ENCODE measurements at regions of chr19 and their contacts with region 1.

Region 1: DNA sequence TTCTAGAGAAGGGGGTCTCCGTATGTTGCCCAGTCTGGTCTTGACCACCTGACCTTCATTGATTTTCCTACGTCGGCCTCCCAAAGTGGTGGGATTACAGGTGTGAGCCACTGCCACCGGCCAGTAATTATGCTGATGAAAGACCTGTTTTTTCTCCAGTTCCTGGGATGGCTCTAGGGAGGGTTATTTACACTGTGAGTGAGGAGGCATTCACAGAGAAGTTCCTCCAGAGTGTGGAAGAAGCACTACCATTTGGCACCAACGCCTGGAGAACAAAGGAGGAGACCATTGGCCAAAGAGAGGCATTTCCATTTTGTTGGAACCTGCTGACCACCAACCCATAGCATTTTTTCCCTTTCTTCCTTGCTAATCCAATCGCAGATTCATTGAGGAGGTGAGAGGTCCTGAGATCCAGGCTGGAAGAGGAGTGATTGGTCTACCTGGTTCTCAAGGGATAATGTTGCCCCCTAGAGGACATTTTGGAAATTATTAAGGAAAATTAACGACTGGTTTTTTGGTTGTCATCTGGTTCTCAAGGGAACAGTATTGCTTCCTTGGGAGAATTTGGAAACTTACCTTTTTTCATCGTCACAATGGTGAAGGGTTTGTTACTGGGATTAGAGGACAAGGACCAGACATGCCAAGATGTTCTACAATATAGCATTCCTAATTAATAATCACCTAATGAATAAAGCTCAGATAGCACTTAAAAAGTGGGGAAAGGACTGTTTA is 5.5 kb upstream of the SAE1 start:
- DNase-seq: no peak
- H3K4me3 ChIP-seq: no peak overlapping the region
- CTCF ChIP-seq: peak in 1 of 3 donors; percentile 41
- POLR2A ChIP-seq: no peak

Region 2: GRCh38 chr19:46697204-46697960 is 427.7 kb before region 1 on chr19:
- intact Hi-C with region 1: no loop called
- DNase-seq: peak; percentile 87 to 98
- H3K4me3 ChIP-seq: no peak overlapping the region
- CTCF ChIP-seq: no peak
- POLR2A ChIP-seq: no peak

Region 3: GRCh38 chr19:46898731-46899130 is 226.4 kb before region 1 on chr19:
- intact Hi-C with region 1: no loop called
- DNase-seq: peak in 1 of 2 donors; percentile 61
- H3K4me3 ChIP-seq: no peak overlapping the region
- CTCF ChIP-seq: no peak
- POLR2A ChIP-seq: no peak

Region 4: GRCh38 chr19:47013041-47013517 is 112.0 kb before region 1 on chr19:
- intact Hi-C with region 1: loop called (anchors 10 kb)
- DNase-seq: peak; percentile 59 to 96
- H3K4me3 ChIP-seq: no peak overlapping the region
- CTCF ChIP-seq: peak in 1 of 3 donors; percentile 85
- POLR2A ChIP-seq: no peak

Region 5: DNA sequence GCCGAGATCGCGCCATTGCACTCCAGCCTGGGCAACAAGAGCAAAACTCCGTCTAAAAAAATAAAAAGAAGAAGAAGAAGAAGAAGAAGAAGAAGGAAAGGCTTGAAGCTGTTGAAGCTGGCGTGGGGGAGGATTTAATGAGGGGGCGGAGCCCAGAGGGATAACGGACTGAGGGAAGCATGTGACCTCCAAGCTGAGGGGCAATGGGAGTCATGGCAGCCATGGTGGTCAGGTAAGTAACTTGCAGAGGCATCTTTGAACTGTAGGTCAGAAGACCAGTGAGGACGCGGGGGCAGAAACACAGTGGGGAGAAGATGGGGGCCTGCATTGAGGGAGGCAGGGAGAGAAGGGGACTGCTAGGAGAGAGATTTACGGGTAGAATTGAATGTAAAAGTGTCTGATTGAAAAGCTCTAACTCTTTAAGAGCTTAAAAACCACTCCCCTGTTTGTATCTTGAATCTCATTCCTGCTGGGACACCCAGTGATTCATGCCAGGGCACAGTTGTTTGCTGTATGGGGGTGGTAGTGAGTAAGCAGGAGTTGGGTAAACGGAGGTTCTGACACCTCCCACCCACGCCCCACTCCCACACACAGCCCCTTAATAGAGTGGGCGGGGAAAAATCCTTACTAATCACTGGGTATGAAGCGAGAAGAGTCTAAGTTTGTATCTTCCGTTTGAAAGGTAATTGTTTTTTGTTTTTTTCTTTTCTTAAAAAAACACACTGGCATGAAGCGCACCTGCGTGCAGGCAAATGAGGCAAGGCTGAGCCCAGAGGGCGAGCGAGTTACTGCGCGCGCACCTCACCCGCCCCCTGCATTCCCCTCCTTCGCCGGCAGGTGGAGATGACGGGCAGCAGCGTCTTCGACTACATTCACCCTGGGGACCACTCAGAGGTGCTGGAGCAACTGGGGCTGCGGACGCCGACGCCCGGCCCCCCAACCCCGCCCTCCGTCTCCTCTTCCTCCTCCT is 89.7 kb before region 1 on chr19:
- intact Hi-C with region 1: no loop called
- DNase-seq: peak; percentile 83 to 97
- H3K4me3 ChIP-seq: no peak overlapping the region
- CTCF ChIP-seq: peak in 2 of 3 donors; percentile 46 to 87
- POLR2A ChIP-seq: no peak

Region 6: DNA sequence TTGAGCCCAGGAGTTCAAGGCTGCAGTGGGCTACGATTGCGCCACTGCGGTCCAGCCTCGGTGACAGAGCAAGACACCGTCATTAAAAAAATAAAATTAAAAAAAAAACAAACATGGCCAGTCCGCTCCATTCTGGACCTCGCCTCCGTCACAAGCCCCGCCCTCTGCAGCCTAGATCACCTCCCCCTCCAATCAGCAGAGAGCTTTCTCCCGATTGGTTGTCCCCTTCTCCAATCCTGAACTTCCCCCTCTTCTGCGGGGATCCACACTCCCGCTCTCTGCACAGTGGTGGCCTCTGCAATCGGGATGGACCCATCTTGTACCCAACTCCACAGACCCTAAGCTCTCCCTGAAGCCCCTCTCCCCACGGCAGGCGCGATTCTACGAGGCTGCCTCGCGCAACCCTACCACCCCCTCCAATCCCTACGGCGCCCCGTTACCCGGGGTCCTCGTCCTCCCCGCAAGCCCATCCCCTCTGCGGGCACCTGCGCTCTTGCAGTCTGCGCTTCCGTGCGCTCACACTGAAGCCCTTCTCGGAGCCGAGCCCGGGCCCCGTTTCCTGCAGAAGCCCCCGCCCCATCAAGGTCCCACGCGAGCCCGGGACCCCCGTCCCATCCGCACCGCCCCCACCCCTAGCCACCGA is 77.2 kb before region 1 on chr19:
- intact Hi-C with region 1: no loop called
- DNase-seq: peak; percentile 80 to 94
- H3K4me3 ChIP-seq: peak overlapping the region; percentile 59
- CTCF ChIP-seq: no peak
- POLR2A ChIP-seq: no peak

Region 7: DNA sequence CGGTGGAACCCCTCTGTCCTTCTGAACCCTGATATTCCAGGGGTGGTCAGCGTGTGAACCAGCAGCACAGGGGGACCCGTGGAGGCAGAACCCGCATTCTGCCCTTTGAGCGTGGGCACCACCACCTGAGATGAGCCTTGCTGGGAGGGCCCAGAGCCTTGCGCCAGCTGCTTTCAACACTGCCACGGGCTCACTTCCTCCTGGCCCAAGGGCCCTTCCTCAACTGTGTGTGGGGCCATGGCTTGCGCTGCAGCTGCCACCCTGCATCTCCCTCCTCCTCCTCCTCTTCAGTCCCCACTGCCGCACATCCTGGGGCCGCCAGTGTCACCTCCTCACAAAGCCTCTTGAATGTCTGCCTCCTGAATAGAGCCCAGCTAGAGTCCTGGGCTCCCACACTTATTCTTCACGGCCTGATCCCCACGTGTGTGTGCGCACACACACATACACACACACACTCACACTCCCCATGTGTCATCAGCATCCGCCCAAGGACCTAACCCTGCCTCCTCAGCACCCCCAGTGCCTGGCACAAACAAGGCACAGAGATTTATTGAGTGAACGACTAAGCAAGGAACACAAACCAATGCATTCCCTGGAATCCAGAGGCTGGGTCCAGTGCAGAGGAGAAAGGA is 49.8 kb before region 1 on chr19:
- intact Hi-C with region 1: loop called (anchors 2 kb)
- DNase-seq: no peak
- H3K4me3 ChIP-seq: no peak overlapping the region
- CTCF ChIP-seq: no peak
- POLR2A ChIP-seq: no peak